ENCODE measurements at regions of chr17 and their contacts with region 1.

Region 1: DNA sequence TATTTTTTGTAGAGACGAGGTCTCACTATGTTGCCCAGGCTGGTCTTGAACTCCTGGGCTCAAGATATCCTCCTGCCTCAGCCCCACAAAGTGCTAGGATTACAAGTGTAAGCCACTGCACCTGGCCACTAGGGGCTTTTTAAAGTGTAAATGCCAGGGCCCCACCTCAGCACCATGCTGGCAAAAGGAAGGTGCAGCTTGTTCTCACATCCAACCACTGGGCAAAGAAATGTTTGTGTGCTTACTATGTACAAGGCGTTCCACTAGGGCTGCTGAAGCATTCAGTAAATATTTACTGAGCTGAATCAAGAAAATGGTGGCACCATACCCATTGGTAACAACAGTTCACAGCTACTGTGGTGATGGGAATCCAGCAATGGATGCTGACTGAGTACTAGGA is 22.6 kb downstream of the COG1 start:
- DNase-seq: no peak
- H3K4me3 ChIP-seq: no peak overlapping the region
- H3K27ac ChIP-seq: no peak overlapping the region
- H3K4me1 ChIP-seq: peaks cover 0 to 3% (median 0%) of the 10 kb centered on the region in 4 experiments
- H3K27me3 ChIP-seq: no peaks in the 10 kb centered on the region

Region 2: GRCh38 chr17:73228748-73229236 is 13.3 kb after region 1 on chr17:
- CTCF ChIA-PET with region 1: interaction called, 14 read pairs
- POLR2A ChIA-PET with region 1: interaction called, 4 read pairs
- DNase-seq: peak; percentile 52 to 86 (median 76)
- H3K4me3 ChIP-seq: no peak overlapping the region
- H3K27ac ChIP-seq: no peak overlapping the region
- H3K4me1 ChIP-seq: peaks cover 18 to 73% (median 52%) of the 10 kb centered on the region in 4 experiments
- H3K27me3 ChIP-seq: no peaks in the 10 kb centered on the region